GM18951 (cell line): ENCODE measurements at regions of chr17 and their contacts with region 1.

Region 1: GRCh38 chr17:29369831-29370735 is 20.1 kb upstream of the TAOK1 start:
- POLR2A ChIP-seq: no peak

Region 2: GRCh38 chr17:29533976-29534375 is 163.9 kb after region 1 on chr17:
- in situ Hi-C with region 1: loop called (anchors 10 kb)
- POLR2A ChIP-seq: no peak